Ascending aorta (tissue), 2 donors: ENCODE measurements at regions of chr15 and their contacts with region 1.

Region 1: GRCh38 chr15:64841258-64842095 is at the start of gene PLEKHO2:
- DNase-seq: peak; percentile 87 to 98
- H3K4me3 ChIP-seq: peak within 1 kb of the TSS; percentile 88 to 92
- H3K27ac ChIP-seq: peak within 1 kb of the TSS; percentile 92 to 98
- H3K4me1 ChIP-seq: peaks cover 18 to 34% of the 10 kb centered on the region in 2 donors
- H3K27me3 ChIP-seq: no peaks in the 10 kb centered on the region
- CTCF ChIP-seq: peak in 1 of 3 experiments; percentile 13
- total RNA-seq, gene PLEKHO2: 41.4 TPM

Region 2: GRCh38 chr15:63504247-63504978 is 1337.1 kb before region 1 on chr15 and contains the start of gene USP3:
- intact Hi-C with region 1: loop called (anchors 5 kb)
- DNase-seq: peak; percentile 86 to 98
- H3K4me3 ChIP-seq: peak within 1 kb of the TSS; percentile 93 to 94
- H3K27ac ChIP-seq: peak within 1 kb of the TSS; percentile 98 to 99
- H3K4me1 ChIP-seq: peaks cover 6 to 55% of the 10 kb centered on the region in 2 donors
- H3K27me3 ChIP-seq: no peaks in the 10 kb centered on the region
- CTCF ChIP-seq: peak; percentile 56 to 63 (median 60)
- total RNA-seq, gene USP3: 61.9 TPM

Region 3: GRCh38 chr15:64877435-64877834 is 36.0 kb after region 1 on chr15:
- intact Hi-C with region 1: loop called (anchors 1 kb)
- DNase-seq: peak; percentile 47 to 87
- H3K4me3 ChIP-seq: no peak overlapping the region
- H3K27ac ChIP-seq: peak overlapping the region; percentile 58 to 60
- H3K4me1 ChIP-seq: peaks cover 0 to 13% of the 10 kb centered on the region in 2 donors
- H3K27me3 ChIP-seq: no peaks in the 10 kb centered on the region
- CTCF ChIP-seq: no peak

Region 4: GRCh38 chr15:64911311-64912191 is 70.1 kb after region 1 on chr15 and contains the start of gene ANKDD1A:
- intact Hi-C with region 1: loop called (anchors 5 kb)
- DNase-seq: peak in 1 of 2 donors; percentile 87
- H3K4me3 ChIP-seq: peak within 1 kb of the TSS; percentile 78 to 83
- H3K27ac ChIP-seq: peak within 1 kb of the TSS; percentile 56 to 65
- H3K4me1 ChIP-seq: peaks cover 0 to 11% of the 10 kb centered on the region in 2 donors
- H3K27me3 ChIP-seq: no peaks in the 10 kb centered on the region
- CTCF ChIP-seq: no peak
- total RNA-seq, gene ANKDD1A: 28.6 TPM

Region 5: DNA sequence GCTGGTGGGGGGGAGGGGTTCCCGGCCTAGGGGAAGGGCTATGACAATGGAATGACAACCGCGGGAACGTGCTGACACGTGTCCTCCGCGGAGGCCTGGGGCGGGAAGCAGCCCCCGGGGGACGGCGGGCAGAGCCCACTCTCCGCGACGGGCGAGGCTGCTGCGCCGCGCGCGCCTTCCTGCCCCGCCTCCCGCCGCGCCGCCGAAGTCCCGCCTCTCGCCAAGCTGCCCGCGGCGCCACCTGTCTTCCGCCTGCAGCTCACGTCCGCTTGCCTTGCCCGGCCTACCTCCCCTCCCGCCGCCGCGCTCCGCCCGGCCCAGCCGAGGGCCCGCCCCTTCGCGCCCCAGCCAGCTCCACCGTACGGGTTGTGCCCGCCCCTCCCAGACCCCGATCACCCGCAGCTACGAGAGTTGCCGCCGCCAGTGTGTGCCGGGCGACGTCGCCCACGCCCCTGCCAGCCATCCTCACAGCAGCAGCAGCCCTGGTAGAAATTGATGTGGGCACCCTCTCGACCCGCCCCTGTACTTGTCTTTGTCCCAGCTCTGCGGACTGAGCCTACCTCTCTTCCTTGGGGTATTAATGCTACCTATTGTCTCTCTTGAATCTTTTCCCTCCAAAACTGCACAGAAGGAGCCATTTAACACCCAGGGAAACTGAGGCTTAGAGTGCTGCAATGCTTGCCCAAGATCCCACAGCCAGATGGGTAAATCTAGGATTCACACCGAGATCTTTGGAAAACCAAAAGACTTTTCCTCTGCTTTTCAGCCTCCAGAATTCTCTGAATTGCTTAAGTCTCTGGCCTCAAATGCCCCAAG is 445.4 kb after region 1 on chr15 and contains the start of gene PARP16:
- intact Hi-C with region 1: loop called (anchors 10 kb)
- DNase-seq: peak; percentile 76 to 95
- H3K4me3 ChIP-seq: peak within 1 kb of the TSS; percentile 85 to 95
- H3K27ac ChIP-seq: peak within 1 kb of the TSS; percentile 87 to 92
- H3K4me1 ChIP-seq: peaks cover 0 to 19% of the 10 kb centered on the region in 2 donors
- H3K27me3 ChIP-seq: no peaks in the 10 kb centered on the region
- CTCF ChIP-seq: peak; percentile 33 to 62 (median 52)
- total RNA-seq, gene PARP16: 2.9 TPM